CD4-positive, alpha-beta T cell (primary cell): ENCODE measurements at regions of chr12 and their contacts with region 1.

Region 1: DNA sequence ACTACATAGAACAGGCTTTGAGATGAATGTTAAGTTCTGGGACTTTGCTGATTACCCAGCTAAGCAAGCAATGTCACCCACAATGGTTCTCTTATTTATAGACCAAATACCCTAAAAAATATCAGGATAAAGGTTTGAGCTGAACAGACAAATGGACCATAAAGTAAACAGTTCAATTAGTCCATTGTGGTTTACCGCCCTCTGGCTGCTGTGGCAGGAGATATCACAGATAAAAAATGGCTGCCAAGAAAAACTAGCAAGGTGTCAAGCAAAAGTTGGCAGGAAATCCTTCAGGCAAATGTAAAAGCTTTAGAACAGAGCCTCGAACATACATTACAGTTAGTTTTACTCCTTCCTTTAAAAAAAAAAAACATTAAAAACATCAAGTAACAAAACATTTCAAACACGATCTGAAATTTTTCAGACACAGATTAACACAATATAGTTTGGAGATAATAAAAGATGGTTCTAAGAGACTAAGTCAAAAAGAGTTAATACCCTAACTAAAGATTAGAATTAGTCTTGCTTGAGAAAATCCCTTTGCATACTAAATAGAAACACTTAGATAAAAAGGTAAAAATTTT is 41.3 kb downstream of the MED13L start:
- DNase-seq: peak; percentile 15 to 76 (median 31)
- ATAC-seq: peak; percentile 89
- H3K4me3 ChIP-seq: no peak overlapping the region
- H3K4me3 Mint-ChIP-seq: peak overlapping the region; percentile 3
- H3K27ac ChIP-seq: peak overlapping the region in 1 of 2 donors; percentile 22
- H3K27ac Mint-ChIP-seq: peak overlapping the region; percentile 46
- H3K4me1 ChIP-seq: peaks cover 7% of the 10 kb centered on the region
- H3K4me1 Mint-ChIP-seq: peaks cover 61% of the 10 kb centered on the region
- H3K27me3 ChIP-seq: no peaks in the 10 kb centered on the region
- H3K27me3 Mint-ChIP-seq: no peaks in the 10 kb centered on the region
- CTCF ChIP-seq: peak; percentile 74

Region 2: GRCh38 chr12:115871714-115872113 is 364.5 kb before region 1 on chr12:
- CTCF ChIA-PET with region 1: no interaction called
- POLR2A ChIA-PET with region 1: no interaction called
- intact Hi-C with region 1: no loop called
- DNase-seq: no peak
- ATAC-seq: no peak
- H3K4me3 ChIP-seq: no peak overlapping the region
- H3K4me3 Mint-ChIP-seq: no peak overlapping the region
- H3K27ac ChIP-seq: no peak overlapping the region
- H3K27ac Mint-ChIP-seq: no peak overlapping the region
- H3K4me1 ChIP-seq: no peaks in the 10 kb centered on the region
- H3K4me1 Mint-ChIP-seq: no peaks in the 10 kb centered on the region
- H3K27me3 ChIP-seq: peaks cover 7 to 25% of the 10 kb centered on the region in 2 experiments
- H3K27me3 Mint-ChIP-seq: peaks cover 67% of the 10 kb centered on the region
- CTCF ChIP-seq: no peak

Region 3: DNA sequence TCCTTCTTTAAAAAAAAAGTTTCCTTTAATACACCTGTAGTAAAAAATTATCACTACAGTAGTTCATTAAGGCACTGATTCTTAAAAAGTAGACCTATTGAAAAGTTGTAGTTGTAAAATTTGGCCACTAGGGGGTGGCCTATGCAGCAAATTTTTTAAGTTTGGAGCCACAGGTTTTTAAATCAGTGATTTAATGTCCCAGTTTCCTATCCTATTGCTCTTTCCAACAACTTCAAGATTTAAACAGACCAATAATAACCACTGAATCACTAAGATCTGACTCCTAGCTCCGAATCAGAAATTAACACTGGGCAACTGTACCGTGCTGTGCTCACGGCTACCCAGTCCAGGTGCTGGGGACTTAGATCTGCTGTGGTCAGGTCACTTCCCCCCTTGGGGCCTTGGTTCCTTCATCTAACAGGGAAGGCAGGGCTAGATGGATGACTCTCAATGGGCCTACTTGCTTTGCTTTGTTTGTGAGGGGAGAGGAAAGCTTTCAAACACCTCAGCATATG is 238.1 kb before region 1 on chr12:
- CTCF ChIA-PET with region 1: no interaction called
- POLR2A ChIA-PET with region 1: no interaction called
- intact Hi-C with region 1: loop called (anchors 1 to 5 kb)
- DNase-seq: peak in 4 of 14 experiments; percentile 35 to 69 (median 56)
- ATAC-seq: peak; percentile 46
- H3K4me3 ChIP-seq: no peak overlapping the region
- H3K4me3 Mint-ChIP-seq: no peak overlapping the region
- H3K27ac ChIP-seq: no peak overlapping the region
- H3K27ac Mint-ChIP-seq: peak overlapping the region; percentile 54
- H3K4me1 ChIP-seq: peaks cover 3% of the 10 kb centered on the region
- H3K4me1 Mint-ChIP-seq: peaks cover 26% of the 10 kb centered on the region
- H3K27me3 ChIP-seq: no peaks in the 10 kb centered on the region
- H3K27me3 Mint-ChIP-seq: no peaks in the 10 kb centered on the region
- CTCF ChIP-seq: peak; percentile 94

Region 4: DNA sequence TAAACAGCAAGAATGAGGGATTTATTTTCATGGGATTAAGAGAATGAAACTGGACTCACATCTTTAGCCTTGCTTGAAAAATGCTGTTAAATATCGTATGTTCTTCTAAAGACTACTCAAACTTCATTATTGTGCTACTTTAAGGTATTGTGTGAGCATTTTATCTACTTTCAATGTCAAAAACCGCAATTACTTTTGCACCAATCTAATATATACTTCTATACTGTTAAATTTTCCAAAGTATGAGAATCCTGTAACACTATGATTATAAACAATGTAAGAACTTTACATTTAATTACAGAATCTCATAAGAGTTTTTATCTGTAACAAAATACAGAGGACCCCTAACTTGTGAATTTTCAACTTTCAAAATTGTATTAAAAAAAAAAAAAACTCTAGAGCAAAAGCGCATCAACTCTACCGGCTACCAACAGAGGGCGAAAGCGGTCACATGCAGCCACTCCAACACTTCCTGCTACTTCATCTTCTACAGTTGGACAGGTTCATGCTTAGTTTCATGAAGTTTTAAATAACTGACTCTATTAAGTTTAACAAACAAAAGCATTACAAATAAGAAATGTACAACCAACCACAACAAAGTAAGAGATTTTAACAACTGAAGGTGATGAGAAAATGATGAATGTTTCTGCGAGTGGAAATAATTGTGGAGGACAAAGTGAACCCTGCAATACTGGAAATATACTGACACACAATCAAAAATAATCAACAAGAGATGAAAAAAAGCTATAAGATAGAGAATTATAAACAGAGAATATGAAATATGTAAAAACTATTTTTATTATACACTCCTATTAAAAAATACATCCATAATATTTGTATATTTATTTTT is 169.6 kb before region 1 on chr12:
- CTCF ChIA-PET with region 1: interaction called, 5 read pairs
- POLR2A ChIA-PET with region 1: no interaction called
- intact Hi-C with region 1: loop called (anchors 1 to 5 kb)
- DNase-seq: peak; percentile 32 to 80 (median 44)
- ATAC-seq: peak; percentile 89
- H3K4me3 ChIP-seq: no peak overlapping the region
- H3K4me3 Mint-ChIP-seq: no peak overlapping the region
- H3K27ac ChIP-seq: no peak overlapping the region
- H3K27ac Mint-ChIP-seq: no peak overlapping the region
- H3K4me1 ChIP-seq: no peaks in the 10 kb centered on the region
- H3K4me1 Mint-ChIP-seq: peaks cover 77% of the 10 kb centered on the region
- H3K27me3 ChIP-seq: no peaks in the 10 kb centered on the region
- H3K27me3 Mint-ChIP-seq: no peaks in the 10 kb centered on the region
- CTCF ChIP-seq: peak; percentile 90

Region 5: DNA sequence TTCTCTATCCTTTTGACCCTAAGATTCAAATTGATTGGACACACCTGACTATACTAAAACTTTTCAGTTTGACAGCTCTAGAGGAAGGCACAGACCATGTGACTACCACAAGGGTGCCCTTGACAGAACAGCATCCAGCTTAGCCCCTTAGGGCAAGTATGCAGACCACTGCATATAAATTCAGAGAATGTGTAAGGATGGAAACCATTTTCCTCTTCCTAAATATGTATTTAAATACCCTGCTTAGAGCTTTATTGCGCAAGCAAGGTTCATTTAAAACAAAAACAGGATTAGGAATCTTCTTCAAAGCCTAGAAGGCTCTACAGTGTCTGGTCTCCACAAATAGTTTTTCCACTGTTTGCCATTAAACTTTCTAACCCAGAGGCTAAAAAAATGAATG is 161.6 kb before region 1 on chr12:
- CTCF ChIA-PET with region 1: no interaction called
- POLR2A ChIA-PET with region 1: no interaction called
- intact Hi-C with region 1: loop called in 1 of 2 experiments (anchors 5 kb)
- DNase-seq: no peak
- ATAC-seq: no peak
- H3K4me3 ChIP-seq: no peak overlapping the region
- H3K4me3 Mint-ChIP-seq: no peak overlapping the region
- H3K27ac ChIP-seq: no peak overlapping the region
- H3K27ac Mint-ChIP-seq: peak overlapping the region; percentile 2
- H3K4me1 ChIP-seq: no peaks in the 10 kb centered on the region
- H3K4me1 Mint-ChIP-seq: peaks cover 53% of the 10 kb centered on the region
- H3K27me3 ChIP-seq: no peaks in the 10 kb centered on the region
- H3K27me3 Mint-ChIP-seq: no peaks in the 10 kb centered on the region
- CTCF ChIP-seq: no peak

Region 6: DNA sequence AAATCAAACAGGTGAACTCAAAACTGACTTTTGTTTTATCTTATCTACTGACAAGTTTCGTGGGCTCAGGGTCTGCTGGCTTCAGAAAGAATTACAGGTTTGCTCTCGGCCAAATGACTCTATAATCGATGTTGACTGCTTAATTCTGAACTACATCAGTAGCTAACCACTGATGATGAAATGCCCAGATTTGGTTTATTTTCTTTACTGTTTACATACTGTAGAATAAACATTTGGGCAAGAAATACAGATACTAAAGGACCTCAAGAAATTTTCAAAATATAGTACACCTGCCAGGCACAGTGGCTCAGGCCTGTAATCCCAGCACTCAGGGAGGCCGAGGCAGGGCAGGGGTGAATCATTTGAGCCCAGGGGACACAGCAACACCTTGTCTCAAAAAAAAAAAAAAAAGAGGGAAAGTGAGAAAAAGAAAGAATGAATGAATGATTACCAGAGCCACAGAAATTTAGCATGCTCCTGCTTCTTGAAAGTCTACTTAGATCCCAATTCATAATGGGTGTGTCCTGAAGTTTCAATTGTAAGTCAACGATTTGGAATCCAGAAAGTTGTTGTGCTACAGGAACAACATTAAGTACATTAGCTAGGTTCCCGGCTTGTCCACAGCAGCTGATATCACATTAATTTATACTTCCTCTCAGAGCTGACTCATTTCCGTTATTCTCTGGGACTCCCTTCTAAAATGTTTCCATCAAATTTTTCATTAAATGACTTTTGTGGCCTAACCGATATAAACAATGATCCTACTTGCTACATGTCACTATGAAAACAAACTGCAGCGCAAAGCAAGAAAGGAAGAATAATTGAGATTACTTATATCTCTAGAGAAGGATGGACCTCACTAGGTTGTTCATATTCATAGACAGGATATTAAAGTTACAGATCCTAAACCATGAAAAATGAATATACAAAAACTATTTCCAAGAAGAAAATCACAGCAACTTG is 93.0 kb before region 1 on chr12:
- CTCF ChIA-PET with region 1: interaction called, 10 read pairs
- POLR2A ChIA-PET with region 1: no interaction called
- intact Hi-C with region 1: loop called in 1 of 2 experiments (anchors 10 kb)
- DNase-seq: peak in 3 of 14 experiments; percentile 25 to 32 (median 28)
- ATAC-seq: peak; percentile 26
- H3K4me3 ChIP-seq: no peak overlapping the region
- H3K4me3 Mint-ChIP-seq: peak overlapping the region; percentile 13
- H3K27ac ChIP-seq: no peak overlapping the region
- H3K27ac Mint-ChIP-seq: peak overlapping the region; percentile 13
- H3K4me1 ChIP-seq: peaks cover 15% of the 10 kb centered on the region
- H3K4me1 Mint-ChIP-seq: peaks cover 50% of the 10 kb centered on the region
- H3K27me3 ChIP-seq: no peaks in the 10 kb centered on the region
- H3K27me3 Mint-ChIP-seq: no peaks in the 10 kb centered on the region
- CTCF ChIP-seq: no peak

Region 7: GRCh38 chr12:116397148-116397547 is 160.9 kb after region 1 on chr12:
- CTCF ChIA-PET with region 1: no interaction called
- POLR2A ChIA-PET with region 1: no interaction called
- intact Hi-C with region 1: no loop called
- DNase-seq: no peak
- ATAC-seq: no peak
- H3K4me3 ChIP-seq: no peak overlapping the region
- H3K4me3 Mint-ChIP-seq: no peak overlapping the region
- H3K27ac ChIP-seq: no peak overlapping the region
- H3K27ac Mint-ChIP-seq: no peak overlapping the region
- H3K4me1 ChIP-seq: peaks cover 8% of the 10 kb centered on the region
- H3K4me1 Mint-ChIP-seq: peaks cover 12% of the 10 kb centered on the region
- H3K27me3 ChIP-seq: no peaks in the 10 kb centered on the region
- H3K27me3 Mint-ChIP-seq: no peaks in the 10 kb centered on the region
- CTCF ChIP-seq: no peak